ENCODE measurements at regions of chr4 and their contacts with region 1.

Region 1: GRCh38 chr4:186137196-186137794 is 32.8 kb downstream of the FAM149A start:
- DNase-seq: no peak
- ATAC-seq: peak in 1 of 4 donors; percentile 32
- H3K4me3 ChIP-seq: peak overlapping the region in 3 of 12 donors; percentile 4 to 37 (median 27)
- H3K27ac ChIP-seq: no peak overlapping the region
- H3K4me1 ChIP-seq: peaks cover 0 to 5% (median 0%) of the 10 kb centered on the region in 12 donors
- H3K27me3 ChIP-seq: no peaks in the 10 kb centered on the region
- CTCF ChIP-seq: peak; percentile 45 to 78 (median 67)
- POLR2A ChIP-seq: no peak

Region 2: DNA sequence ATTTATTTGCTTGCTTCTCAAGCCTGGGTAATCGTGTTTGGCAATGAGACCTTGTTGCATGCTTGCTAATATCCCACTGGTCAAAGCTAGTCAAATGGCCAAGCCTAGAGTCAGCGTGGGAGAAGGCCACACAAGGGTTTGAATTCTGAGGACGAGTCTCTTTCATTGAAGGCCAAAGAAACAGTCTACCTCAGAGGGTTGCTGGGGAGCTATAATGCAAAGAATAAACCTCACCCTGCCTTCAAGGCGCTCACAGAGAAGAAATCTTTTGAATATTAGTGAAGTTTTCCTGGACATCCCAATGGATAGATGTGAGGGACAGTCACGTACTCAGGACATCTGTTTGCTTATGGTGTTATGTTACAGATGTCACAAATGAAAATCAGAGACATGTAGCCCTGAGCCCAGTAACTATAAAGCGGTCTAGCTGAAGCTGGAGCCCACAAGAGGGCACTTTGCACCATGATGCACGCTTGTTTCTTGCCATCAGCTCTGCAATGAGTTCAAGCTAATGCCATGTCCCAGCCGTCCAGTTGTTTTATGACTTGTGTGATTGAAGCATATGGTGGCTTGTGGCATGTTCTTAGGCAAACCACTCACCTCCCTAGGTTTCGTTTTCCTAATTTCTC is 69.4 kb before region 1 on chr4:
- intact Hi-C with region 1: loop called in 9 of 10 experiments (anchors 2 to 5 kb)
- DNase-seq: peak in 4 of 5 donors; percentile 50 to 62 (median 55)
- ATAC-seq: peak; percentile 71 to 92 (median 91)
- H3K4me3 ChIP-seq: peak overlapping the region; percentile 19 to 71 (median 60)
- H3K27ac ChIP-seq: peak overlapping the region in 6 of 12 donors; percentile 46 to 79 (median 72)
- H3K4me1 ChIP-seq: peaks cover 0 to 20% (median 4%) of the 10 kb centered on the region in 12 donors
- H3K27me3 ChIP-seq: no peaks in the 10 kb centered on the region
- CTCF ChIP-seq: peak; percentile 35 to 65 (median 53)
- POLR2A ChIP-seq: no peak

Region 3: DNA sequence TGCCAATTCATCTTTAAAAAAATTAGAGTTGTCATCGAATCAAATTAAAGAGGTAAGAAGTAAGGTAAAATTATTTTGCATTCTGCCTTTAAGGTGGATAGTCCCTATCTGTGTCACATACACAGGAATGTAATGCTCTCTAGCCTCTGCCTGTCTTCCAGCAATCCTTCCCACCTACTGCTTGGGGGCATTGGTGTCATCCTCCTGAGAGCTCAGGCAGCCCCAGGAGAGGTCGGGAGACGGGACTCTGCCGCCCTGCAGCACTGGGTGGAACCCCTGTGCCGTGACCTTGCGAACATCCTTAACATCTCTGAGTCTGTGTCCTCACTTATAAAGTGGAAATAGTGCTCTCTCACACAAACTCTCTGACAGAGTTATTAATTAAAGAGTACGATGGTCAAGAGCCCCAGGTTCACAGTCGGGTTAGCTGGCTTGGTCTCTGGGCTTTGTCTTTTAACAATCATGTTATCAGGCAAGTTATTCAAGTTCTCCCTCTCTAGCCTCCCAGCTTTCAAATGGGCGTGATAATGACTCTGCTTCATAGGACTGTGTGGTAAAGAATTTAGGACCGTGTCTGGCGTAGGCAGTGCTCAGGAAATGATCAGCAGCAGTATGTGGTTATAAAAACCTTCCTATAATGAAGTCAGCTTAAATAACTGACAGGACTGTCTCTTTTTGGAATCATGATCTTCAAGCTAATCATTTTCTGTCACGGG is 58.2 kb before region 1 on chr4:
- intact Hi-C with region 1: loop called in 1 of 10 experiments (anchors 5 kb)
- DNase-seq: no peak
- ATAC-seq: peak in 1 of 4 donors; percentile 12
- H3K4me3 ChIP-seq: no peak overlapping the region
- H3K27ac ChIP-seq: no peak overlapping the region
- H3K4me1 ChIP-seq: peaks cover 0 to 6% (median 0%) of the 10 kb centered on the region in 12 donors
- H3K27me3 ChIP-seq: no peaks in the 10 kb centered on the region
- CTCF ChIP-seq: no peak
- POLR2A ChIP-seq: no peak

Measured in heart left ventricle (tissue), 16 donors.